Left ventricle myocardium superior (tissue), 1 donor: ENCODE measurements at regions of chr5 and their contacts with region 1.

Region 1: DNA sequence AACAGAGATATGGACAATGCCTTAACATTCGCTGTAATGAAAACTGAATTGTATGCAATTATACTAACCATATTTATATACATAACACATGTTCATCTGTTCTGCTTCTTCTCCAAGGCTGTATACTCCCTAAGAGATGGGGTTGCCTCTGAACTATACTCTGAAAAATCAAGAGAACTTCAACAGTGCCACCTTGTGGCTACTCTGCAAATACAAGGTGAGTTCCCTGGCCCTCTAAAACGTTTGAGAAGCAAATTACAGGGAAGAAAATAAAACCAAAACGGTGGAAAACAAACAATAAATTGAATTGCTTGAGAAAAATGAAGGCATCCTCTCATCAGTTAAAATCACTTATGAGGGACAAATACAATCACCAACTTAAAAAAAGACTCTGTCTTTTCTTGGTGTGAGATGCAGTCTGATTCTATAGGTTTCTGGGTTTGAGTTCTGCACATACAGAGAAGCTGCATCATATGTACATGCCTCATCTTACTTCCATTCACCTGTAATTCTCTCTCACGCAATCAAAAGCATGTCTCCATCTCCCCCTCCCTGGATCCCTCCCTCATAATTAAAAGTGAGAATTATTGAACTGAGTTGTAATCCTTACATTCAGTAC is 98.6 kb downstream of the FBXW11 start:
- DNase-seq: no peak
- ATAC-seq: peak; percentile 82

Region 2: GRCh38 chr5:171418316-171418981 is 489.4 kb before region 1 on chr5:
- intact Hi-C with region 1: loop called (anchors 5 kb)
- DNase-seq: peak; percentile 88
- ATAC-seq: peak; percentile 78

Region 3: GRCh38 chr5:171630027-171630669 is 277.7 kb before region 1 on chr5:
- intact Hi-C with region 1: loop called (anchors 5 kb)
- DNase-seq: peak; percentile 75
- ATAC-seq: peak; percentile 97